ENCODE measurements at regions of chr7 and their contacts with region 1.

Region 1: GRCh38 chr7:158704704-158705468 is at the start of gene NCAPG2:
- DNase-seq: peak; percentile 92
- H3K4me3 ChIP-seq: peak within 1 kb of the TSS; percentile 62 to 99 (median 88)
- H3K27ac ChIP-seq: peak within 1 kb of the TSS; percentile 89 to 98 (median 96)
- H3K4me1 ChIP-seq: peaks cover 5 to 31% (median 17%) of the 10 kb centered on the region in 3 donors
- H3K27me3 ChIP-seq: no peaks in the 10 kb centered on the region
- CTCF ChIP-seq: peak in 5 of 6 experiments; percentile 50 to 73 (median 64)
- POLR2A ChIP-seq: peak in 3 of 4 donors; percentile 76 to 95 (median 84)
- total RNA-seq, gene NCAPG2: 7.3 to 23.1 (median 13.7) TPM

Region 2: GRCh38 chr7:158317238-158318205 is 387.4 kb before region 1 on chr7:
- intact Hi-C with region 1: no loop called
- DNase-seq: no peak
- H3K4me3 ChIP-seq: peak overlapping the region in 1 of 4 donors; percentile 18
- H3K27ac ChIP-seq: no peak overlapping the region
- H3K4me1 ChIP-seq: no peaks in the 10 kb centered on the region
- H3K27me3 ChIP-seq: peaks cover 0 to 13% (median 0%) of the 10 kb centered on the region in 4 donors
- CTCF ChIP-seq: no peak
- POLR2A ChIP-seq: no peak

Region 3: DNA sequence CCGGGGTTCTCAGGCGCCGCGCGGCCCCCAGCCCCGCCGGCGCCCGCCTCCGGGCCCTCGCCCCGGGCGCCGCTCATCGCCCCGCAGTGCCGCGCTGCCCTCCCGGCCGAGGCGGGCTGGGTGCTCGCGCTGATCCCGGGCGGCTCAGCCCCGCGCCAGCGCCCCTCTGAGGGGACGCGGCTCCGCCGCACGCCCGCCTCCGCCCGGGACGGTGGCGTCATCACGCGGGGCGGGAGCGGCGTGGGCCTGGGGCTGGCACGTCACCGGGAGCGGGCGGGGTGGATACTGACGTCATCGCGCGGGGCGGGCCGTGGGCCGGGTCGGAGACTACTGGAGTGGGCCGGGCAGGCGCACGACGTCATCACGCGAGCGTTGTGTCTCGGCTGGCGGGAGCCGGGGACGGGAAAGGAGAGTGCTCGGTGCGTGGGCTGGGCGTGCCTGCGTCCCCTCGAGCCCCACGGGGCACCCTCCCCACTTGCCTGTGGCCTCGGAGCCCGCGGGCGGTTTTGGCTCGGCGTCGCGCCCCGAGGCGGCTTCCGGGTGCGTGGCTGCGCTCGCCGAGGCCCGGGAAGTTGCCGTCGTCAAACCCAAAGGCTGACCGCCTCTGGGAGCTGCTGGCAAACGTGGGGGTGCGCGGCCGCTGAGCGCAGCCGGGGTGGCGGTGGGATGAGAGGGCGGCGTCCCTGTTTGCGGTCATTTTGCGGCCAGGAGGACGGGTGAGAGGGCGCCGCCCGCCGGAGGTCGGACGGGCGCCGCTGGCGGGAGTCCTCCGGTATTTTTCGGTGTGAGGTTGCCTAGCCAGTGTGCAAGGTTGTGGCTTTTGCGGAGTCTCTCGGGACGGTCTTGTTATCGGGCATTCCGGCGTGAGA is 124.7 kb after region 1 on chr7 and contains the start of gene ESYT2:
- intact Hi-C with region 1: loop called (anchors 10 kb)
- DNase-seq: peak; percentile 83
- H3K4me3 ChIP-seq: peak within 1 kb of the TSS; percentile 76 to 96 (median 91)
- H3K27ac ChIP-seq: peak within 1 kb of the TSS; percentile 93 to 99 (median 98)
- H3K4me1 ChIP-seq: peaks cover 11 to 46% (median 11%) of the 10 kb centered on the region in 3 donors
- H3K27me3 ChIP-seq: no peaks in the 10 kb centered on the region
- CTCF ChIP-seq: peak in 1 of 6 experiments; percentile 7
- POLR2A ChIP-seq: peak in 2 of 4 donors; percentile 96 to 100
- total RNA-seq, gene ESYT2: 52.1 to 94.2 (median 60.5) TPM

Region 4: GRCh38 chr7:158910254-158911053 is 205.6 kb after region 1 on chr7:
- intact Hi-C with region 1: no loop called
- DNase-seq: no peak
- H3K4me3 ChIP-seq: no peak overlapping the region
- H3K27ac ChIP-seq: no peak overlapping the region
- H3K4me1 ChIP-seq: no peaks in the 10 kb centered on the region
- H3K27me3 ChIP-seq: no peaks in the 10 kb centered on the region
- CTCF ChIP-seq: no peak
- POLR2A ChIP-seq: no peak

Measured in esophagus squamous epithelium (tissue), 5 donors.